Transverse colon (tissue), 4 donors: ENCODE measurements at regions of chr3 and their contacts with region 1.

Region 1: DNA sequence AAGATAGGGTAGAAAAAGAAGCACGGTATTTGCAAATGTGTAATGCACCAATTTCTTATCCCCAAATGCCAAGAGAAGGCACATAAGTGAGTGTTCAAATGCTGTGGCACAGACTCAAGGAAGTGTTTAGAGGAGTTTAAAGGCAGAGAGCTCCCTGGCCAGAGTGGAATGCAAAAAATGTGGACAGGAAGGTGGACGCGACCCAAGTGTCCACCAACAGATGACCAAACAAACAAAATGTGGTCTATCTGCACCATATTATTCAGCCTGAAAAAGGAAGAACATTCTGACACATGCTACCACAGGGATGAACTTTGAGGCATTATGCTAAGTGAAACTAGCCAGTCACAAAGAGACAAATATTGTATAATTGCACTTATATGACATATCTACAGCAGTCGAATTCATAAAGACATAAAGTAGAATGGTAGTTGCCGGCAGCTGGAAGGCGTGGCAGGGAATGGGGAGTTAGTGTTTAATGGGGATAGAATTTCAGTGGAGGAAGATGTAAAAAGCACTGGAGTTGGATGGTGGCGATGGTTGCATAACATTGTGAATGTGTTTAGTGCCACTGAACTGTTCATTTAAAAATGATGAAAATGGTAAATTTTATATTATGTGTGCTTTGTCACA is 126.6 kb downstream of the SRGAP3 start:
- DNase-seq: peak; percentile 78
- H3K4me3 ChIP-seq: no peak overlapping the region
- H3K27ac ChIP-seq: peak overlapping the region in 3 of 4 donors; percentile 29 to 51 (median 50)
- H3K4me1 ChIP-seq: peaks cover 0 to 4% (median 4%) of the 10 kb centered on the region in 4 donors
- H3K27me3 ChIP-seq: no peaks in the 10 kb centered on the region
- CTCF ChIP-seq: no peak
- EP300 ChIP-seq: no peak
- POLR2A ChIP-seq: no peak

Region 2: DNA sequence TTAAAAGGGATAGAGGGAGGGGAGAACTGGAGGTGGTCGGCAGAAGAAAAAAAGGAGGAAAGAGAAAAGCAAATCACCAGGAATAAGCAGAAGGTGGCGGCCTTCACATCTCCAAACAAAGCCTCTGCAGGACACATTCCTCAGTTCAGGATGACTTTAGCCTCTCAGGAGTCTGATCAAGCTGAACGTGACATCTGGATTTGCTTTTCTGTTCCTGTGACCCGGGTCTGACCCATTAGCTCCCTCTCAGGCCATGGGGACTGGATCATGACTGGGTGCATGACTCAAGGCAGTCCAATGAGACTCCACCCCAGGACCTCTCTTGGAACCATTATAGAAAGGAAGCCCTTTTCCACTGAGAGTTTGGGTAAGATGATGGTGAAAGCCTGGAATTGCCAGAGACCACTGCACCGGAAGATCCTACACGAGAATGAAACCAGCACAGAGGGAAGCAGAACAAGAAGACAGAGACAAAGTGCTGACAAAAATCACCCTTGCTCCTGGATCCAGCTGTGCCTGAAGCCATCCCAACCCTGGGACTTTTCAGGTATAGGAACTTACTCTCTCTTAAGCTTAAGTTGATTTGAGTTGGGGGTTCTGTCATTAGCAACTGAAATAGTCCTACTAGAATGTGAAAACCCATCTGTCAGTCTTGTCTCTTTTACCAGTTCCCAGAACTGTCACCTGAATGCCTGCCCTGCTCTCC is 114.1 kb before region 1 on chr3:
- in situ Hi-C with region 1: no loop called
- intact Hi-C with region 1: no loop called
- DNase-seq: no peak
- H3K4me3 ChIP-seq: no peak overlapping the region
- H3K27ac ChIP-seq: no peak overlapping the region
- H3K4me1 ChIP-seq: no peaks in the 10 kb centered on the region
- H3K27me3 ChIP-seq: no peaks in the 10 kb centered on the region
- CTCF ChIP-seq: no peak
- EP300 ChIP-seq: no peak
- POLR2A ChIP-seq: no peak

Region 3: GRCh38 chr3:9088441-9089353 is 34.2 kb before region 1 on chr3:
- in situ Hi-C with region 1: no loop called
- intact Hi-C with region 1: loop called (anchors 2 kb)
- DNase-seq: peak; percentile 26
- H3K4me3 ChIP-seq: no peak overlapping the region
- H3K27ac ChIP-seq: no peak overlapping the region
- H3K4me1 ChIP-seq: peaks cover 0 to 10% (median 7%) of the 10 kb centered on the region in 4 donors
- H3K27me3 ChIP-seq: no peaks in the 10 kb centered on the region
- CTCF ChIP-seq: no peak
- EP300 ChIP-seq: no peak
- POLR2A ChIP-seq: no peak

Region 4: GRCh38 chr3:9260305-9260704 is 137.5 kb after region 1 on chr3:
- in situ Hi-C with region 1: no loop called
- intact Hi-C with region 1: no loop called
- DNase-seq: no peak
- H3K4me3 ChIP-seq: no peak overlapping the region
- H3K27ac ChIP-seq: no peak overlapping the region
- H3K4me1 ChIP-seq: no peaks in the 10 kb centered on the region
- H3K27me3 ChIP-seq: no peaks in the 10 kb centered on the region
- CTCF ChIP-seq: no peak
- EP300 ChIP-seq: no peak
- POLR2A ChIP-seq: no peak